ENCODE measurements at regions of chr16 and their contacts with region 1.

Region 1: DNA sequence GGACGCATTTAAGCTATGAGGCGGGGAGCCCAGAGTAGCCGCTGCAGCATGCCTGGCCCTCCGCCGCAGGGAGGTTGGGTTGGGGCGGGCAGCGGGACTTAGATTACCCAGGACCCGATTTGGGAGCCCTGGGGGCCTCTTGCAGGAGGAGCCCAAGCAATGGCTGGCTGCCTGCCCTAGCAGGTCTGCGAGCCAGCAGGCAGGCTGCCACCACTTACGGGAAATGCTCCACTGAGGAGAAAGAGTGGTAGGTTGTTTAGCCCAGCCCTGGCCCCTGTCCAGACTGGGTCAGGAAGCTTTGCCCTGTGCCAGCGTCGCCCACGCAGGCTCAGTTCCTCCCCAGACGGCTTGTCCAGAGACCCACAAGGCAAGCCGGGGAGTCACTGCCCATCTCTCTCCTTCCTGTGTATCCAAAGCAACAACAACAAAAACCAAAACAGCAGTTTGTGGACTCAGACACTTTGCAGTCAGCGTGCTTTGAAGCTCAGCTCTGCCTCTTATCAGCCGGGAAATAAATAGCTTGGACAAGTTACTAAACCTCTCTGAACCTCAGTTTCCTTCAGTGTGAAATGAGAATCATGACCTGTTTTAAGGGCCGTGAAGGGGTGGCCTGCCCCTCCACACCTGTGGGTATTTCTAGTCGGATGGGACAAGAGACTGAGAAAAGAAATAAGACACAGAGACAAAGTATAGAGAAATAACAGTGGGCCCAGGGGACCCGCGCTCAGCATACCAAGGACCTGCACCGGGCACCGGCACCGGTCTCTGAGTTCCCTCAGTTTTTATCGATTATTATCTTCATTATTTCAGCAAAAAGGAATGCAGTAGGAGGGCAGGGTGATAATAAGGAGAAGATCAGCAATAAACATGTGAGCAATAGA is 10.5 kb upstream of the TVP23A start:
- DNase-seq: peak; percentile 79 to 98
- H3K4me3 ChIP-seq: peak overlapping the region in 1 of 2 donors; percentile 30
- H3K27ac ChIP-seq: peak overlapping the region; percentile 93 to 99
- H3K4me1 ChIP-seq: peaks cover 10 to 25% of the 10 kb centered on the region in 2 donors
- H3K27me3 ChIP-seq: no peaks in the 10 kb centered on the region
- CTCF ChIP-seq: no peak

Region 2: GRCh38 chr16:10566589-10566988 is 262.5 kb before region 1 on chr16:
- intact Hi-C with region 1: loop called (anchors 5 kb)
- DNase-seq: no peak
- H3K4me3 ChIP-seq: no peak overlapping the region
- H3K27ac ChIP-seq: peak overlapping the region; percentile 79 to 93
- H3K4me1 ChIP-seq: peaks cover 18 to 77% of the 10 kb centered on the region in 2 donors
- H3K27me3 ChIP-seq: no peaks in the 10 kb centered on the region
- CTCF ChIP-seq: no peak

Region 3: DNA sequence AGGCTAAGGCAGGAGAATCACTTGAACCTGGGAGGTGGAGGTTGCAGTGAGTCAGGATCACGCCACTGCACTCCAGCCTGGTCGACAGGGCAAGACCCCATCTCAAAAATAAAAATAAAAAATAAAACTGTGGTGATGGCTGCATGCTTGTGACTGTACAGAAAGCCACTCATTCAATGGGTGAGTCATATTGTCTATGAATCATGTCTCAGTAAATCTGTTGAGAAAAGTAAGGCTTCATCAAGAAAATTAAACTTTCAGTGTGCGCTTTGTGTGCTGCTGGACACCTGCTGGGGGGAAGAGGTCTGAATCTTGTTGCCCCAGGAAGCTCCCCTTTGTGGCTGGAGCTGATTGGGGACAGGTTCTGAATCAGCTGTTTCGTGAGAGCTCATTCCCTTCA is 74.2 kb before region 1 on chr16:
- intact Hi-C with region 1: loop called (anchors 2 kb)
- DNase-seq: no peak
- H3K4me3 ChIP-seq: no peak overlapping the region
- H3K27ac ChIP-seq: peak overlapping the region; percentile 77 to 80
- H3K4me1 ChIP-seq: peaks cover 5 to 17% of the 10 kb centered on the region in 2 donors
- H3K27me3 ChIP-seq: no peaks in the 10 kb centered on the region
- CTCF ChIP-seq: no peak

Measured in ascending aorta (tissue), 2 donors.